ENCODE measurements at regions of chr3 and their contacts with region 1.

Region 1: GRCh38 chr3:57575966-57576626 is 20.0 kb downstream of the PDE12 start:
- DNase-seq: no peak
- ATAC-seq: no peak
- H3K4me3 ChIP-seq: no peak overlapping the region
- H3K27ac ChIP-seq: no peak overlapping the region
- H3K4me1 ChIP-seq: no peaks in the 10 kb centered on the region
- H3K27me3 ChIP-seq: no peaks in the 10 kb centered on the region
- CTCF ChIP-seq: no peak

Region 2: DNA sequence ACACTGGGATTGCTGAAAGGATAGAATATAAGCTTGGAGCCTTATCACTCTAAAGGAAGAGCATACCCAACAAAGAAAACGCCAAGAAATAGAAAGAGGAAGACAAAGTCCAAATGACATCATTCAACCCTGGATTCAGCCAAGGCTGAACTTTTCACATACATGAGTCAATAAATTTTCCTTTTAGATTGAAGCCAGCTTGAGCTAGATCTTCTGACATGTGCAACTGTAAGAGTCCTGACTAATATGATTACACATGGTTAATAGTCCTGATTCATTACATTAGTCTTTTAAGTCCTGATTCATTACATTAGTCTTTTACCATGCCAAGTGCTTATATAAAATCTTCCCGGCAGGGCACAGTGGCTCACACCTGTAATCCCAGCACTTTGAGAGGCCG is 130.4 kb after region 1 on chr3:
- CTCF ChIA-PET with region 1: no interaction called
- POLR2A ChIA-PET with region 1: interaction called, 10 read pairs
- intact Hi-C with region 1: no loop called
- DNase-seq: peak; percentile 94
- ATAC-seq: peak; percentile 86
- H3K4me3 ChIP-seq: no peak overlapping the region
- H3K27ac ChIP-seq: peak overlapping the region; percentile 74
- H3K4me1 ChIP-seq: peaks cover 20% of the 10 kb centered on the region
- H3K27me3 ChIP-seq: no peaks in the 10 kb centered on the region
- CTCF ChIP-seq: no peak